Activated T-helper 1 cell treated with anti-CD3 and anti-CD28 coated beads, Interleukin-12 subunit alpha, Interleukin-12 subunit beta, Interleukin-2, Interleukin-4 antibody, amounts not matched to agents 30 ng/mL and 10 ng/mL and 1 ng/mL, durations not matched to agents 14 hours and 24 hours and 36 hours (primary cell): ENCODE measurements at regions of chr4 and their contacts with region 1.

Region 1: GRCh38 chr4:121192480-121192879 is 28.4 kb upstream of the TNIP3 start:
- DNase-seq: no peak
- H3K4me3 Mint-ChIP-seq: peak overlapping the region; percentile 45
- H3K27ac Mint-ChIP-seq: peak overlapping the region; percentile 20
- H3K4me1 Mint-ChIP-seq: peaks cover 52% of the 10 kb centered on the region
- H3K27me3 Mint-ChIP-seq: peaks cover 4% of the 10 kb centered on the region

Region 2: GRCh38 chr4:121041307-121042090 is 151.0 kb before region 1 on chr4:
- intact Hi-C with region 1: loop called (anchors 5 kb)
- DNase-seq: peak; percentile 6
- H3K4me3 Mint-ChIP-seq: no peak overlapping the region
- H3K27ac Mint-ChIP-seq: peak overlapping the region; percentile 21
- H3K4me1 Mint-ChIP-seq: peaks cover 16% of the 10 kb centered on the region
- H3K27me3 Mint-ChIP-seq: peaks cover 41% of the 10 kb centered on the region

Region 3: DNA sequence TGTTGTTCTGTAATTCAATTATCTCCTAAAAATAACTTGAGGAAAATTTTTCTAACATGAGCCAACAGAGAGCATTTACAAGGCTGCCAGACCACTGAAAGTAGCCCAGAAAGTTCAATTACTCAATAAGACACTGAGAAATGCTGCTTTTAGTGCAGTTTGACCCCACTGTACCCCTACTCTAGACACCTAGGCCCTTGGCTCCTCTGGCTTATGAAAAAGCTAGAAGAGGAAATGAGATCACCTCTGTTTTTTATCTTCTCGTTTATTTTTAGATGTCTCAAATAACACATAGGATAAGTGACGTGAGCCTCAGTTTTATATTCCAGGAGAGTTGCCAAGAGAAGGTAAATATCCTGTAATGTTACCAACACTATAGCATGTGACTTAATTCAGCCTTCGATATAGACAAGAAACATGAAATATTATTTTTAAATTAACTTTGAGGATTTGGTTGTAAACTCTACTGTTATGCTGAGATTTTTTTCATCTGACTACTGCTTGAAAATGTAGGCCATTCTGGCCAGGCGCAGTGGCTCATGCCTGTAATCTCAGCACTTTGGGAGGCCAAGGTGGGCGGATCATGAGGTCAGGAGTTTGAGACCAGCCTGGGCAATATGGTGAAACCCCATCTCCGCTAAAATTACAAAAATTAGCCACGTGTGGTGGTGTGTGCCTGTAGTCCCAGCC is 52.8 kb before region 1 on chr4:
- intact Hi-C with region 1: loop called (anchors 1 kb)
- DNase-seq: no peak
- H3K4me3 Mint-ChIP-seq: peak overlapping the region; percentile 31
- H3K27ac Mint-ChIP-seq: peak overlapping the region; percentile 69
- H3K4me1 Mint-ChIP-seq: peaks cover 41% of the 10 kb centered on the region
- H3K27me3 Mint-ChIP-seq: no peaks in the 10 kb centered on the region

Region 4: DNA sequence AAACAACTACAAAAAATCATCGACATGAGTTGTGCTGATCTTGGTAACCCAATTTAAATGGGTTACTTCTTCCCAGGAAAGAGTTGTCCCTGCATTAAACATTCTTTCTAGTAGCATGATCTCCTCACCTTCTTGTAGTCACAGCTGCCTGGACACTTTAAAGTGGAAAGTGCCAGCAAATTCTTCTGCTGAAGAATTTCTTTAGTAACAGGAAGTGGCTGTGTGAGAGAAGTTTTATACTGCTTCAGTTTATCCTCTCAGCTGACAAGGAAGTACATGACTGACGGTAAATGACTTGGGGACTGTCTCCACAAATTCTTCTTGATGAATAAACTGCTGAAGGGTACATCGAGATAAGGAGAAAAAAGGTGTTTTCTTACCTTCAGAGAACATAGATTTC is 10.2 kb before region 1 on chr4:
- intact Hi-C with region 1: loop called (anchors 1 kb)
- DNase-seq: peak; percentile 34
- H3K4me3 Mint-ChIP-seq: peak overlapping the region; percentile 82
- H3K27ac Mint-ChIP-seq: peak overlapping the region; percentile 93
- H3K4me1 Mint-ChIP-seq: peaks cover 72% of the 10 kb centered on the region
- H3K27me3 Mint-ChIP-seq: peaks cover 2% of the 10 kb centered on the region

Region 5: DNA sequence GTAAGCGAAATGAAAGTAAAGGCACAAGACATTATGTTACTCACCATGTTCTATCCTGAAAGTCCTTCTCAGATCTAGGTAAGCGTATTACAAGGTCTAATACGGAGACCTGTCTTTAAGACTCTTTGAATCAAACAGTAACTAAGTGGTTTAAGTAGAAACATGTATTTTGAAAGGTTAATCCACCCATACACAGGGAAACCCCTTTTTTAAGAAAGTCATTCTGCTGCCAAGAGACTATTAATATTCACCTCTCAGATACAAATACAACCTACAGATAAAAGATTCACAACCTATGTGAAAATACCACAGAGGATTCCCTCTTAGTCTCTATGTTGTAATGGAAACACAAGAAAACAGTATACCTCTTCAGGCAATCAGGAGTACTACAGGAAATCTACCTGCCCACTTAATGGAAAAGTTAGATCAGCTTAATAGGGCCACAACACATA is 34.9 kb after region 1 on chr4:
- intact Hi-C with region 1: loop called (anchors 1 kb)
- DNase-seq: no peak
- H3K4me3 Mint-ChIP-seq: peak overlapping the region; percentile 76
- H3K27ac Mint-ChIP-seq: peak overlapping the region; percentile 83
- H3K4me1 Mint-ChIP-seq: peaks cover 38% of the 10 kb centered on the region
- H3K27me3 Mint-ChIP-seq: no peaks in the 10 kb centered on the region

Region 6: DNA sequence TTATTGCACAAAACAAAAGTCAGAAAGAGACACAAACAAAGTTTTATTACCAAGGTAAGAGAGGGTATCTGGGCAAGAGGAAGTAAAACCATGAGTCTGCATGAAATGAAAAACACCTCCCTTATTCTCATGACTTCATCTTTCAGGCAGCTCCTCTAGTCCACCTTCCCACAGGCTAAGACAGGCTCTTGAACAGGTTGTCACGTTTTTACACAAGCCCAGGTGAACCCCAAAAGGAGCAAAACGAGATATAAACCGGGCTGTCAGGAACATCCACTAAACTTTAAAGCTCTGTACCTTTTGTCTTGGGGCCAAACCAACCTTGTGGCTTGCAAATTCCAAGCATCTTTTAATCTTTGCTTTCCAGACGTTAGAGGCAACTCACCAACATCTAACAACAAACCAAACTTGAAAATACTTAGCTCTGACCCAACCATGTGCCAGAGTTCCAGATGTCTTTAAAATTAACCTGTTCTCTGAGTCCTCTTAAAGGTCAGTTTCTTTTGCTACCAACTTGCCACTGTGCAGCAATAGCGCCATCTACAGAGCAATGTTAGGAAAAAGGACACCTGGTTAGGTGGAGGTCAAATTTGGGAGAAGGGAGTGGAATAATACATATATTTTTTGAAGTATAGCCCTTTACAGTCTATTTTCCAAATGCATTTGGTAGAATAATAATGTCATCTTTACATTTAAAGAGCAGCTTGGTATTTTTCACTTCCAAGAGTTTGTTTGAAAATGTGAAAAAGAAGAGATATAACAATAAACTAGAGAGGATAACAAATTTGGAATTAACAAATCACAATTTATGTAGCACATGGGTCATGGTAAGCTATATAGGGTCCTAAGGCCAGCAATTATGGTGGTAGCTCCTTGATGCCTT is 115.2 kb after region 1 on chr4:
- intact Hi-C with region 1: loop called (anchors 1 kb)
- DNase-seq: peak; percentile 27
- H3K4me3 Mint-ChIP-seq: no peak overlapping the region
- H3K27ac Mint-ChIP-seq: peak overlapping the region; percentile 25
- H3K4me1 Mint-ChIP-seq: peaks cover 16% of the 10 kb centered on the region
- H3K27me3 Mint-ChIP-seq: peaks cover 14% of the 10 kb centered on the region

Region 7: GRCh38 chr4:121421594-121421993 is 229.1 kb after region 1 on chr4:
- intact Hi-C with region 1: loop called (anchors 5 kb)
- DNase-seq: no peak
- H3K4me3 Mint-ChIP-seq: no peak overlapping the region
- H3K27ac Mint-ChIP-seq: no peak overlapping the region
- H3K4me1 Mint-ChIP-seq: no peaks in the 10 kb centered on the region
- H3K27me3 Mint-ChIP-seq: peaks cover 4% of the 10 kb centered on the region